GM12878 (cell line): ENCODE measurements at regions of chr12 and their contacts with region 1.

Region 1: DNA sequence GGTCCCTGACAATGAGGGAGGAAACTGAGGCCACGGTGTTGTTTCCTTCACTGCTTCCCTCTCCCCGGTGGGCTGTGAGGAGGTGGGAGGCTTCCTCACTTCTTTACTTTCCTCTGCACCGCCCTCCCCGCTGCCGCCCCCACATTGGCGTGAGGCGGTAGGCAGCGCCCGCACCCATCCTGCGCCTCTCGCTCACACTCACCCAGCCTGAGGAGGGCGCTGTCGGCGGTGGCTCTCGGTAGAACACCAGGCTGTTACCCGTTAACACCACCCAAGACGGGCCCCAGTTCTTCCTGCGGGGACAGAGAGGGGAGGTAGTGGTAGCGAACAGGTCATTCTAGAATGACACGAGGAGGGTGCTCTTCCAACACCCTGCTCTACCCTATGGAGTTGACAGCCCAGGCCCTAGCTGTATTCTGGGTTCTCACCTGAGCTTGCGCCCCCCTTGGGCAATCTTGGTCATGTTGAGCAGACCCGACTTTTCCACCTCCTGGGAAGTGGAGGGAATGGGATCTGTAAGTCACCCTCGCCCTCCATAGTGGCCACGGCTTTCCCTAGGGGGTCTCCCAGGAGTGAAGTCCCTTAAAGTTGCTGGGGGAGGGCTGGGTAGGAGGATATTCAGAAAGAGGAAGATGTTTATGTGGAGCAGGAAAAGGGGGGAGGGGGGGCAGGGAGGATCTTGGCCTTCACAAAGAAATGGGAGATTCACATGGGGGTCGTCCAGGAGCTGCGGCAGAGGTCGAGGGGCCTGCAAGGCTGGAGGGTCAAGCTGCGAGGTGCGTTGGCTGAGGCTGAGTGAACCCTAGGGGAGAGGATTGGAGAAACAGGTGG is 3.3 kb downstream of the ARHGAP9 start:
- DNase-seq: no peak
- ATAC-seq: peak; percentile 62
- H3K4me3 ChIP-seq: peak overlapping the region; percentile 92
- H3K27ac ChIP-seq: peak overlapping the region; percentile 85
- H3K4me1 ChIP-seq: peaks cover 34% of the 10 kb centered on the region
- H3K27me3 ChIP-seq: no peaks in the 10 kb centered on the region
- CTCF ChIP-seq: peak; percentile 48 to 81 (median 72)
- EP300 ChIP-seq: no peak
- POLR2A ChIP-seq: peak; percentile 73
- RAD21 ChIP-seq: peak; percentile 43

Region 2: GRCh38 chr12:57487597-57488401 is 11.4 kb after region 1 on chr12 and contains the start of gene MARS1:
- CTCF ChIA-PET with region 1: interaction called, 13 read pairs
- POLR2A ChIA-PET with region 1: interaction called, 4 read pairs
- RAD21 ChIA-PET with region 1: interaction called, 3 read pairs
- SMC1A ChIA-PET with region 1: interaction called, 3 read pairs
- in situ Hi-C with region 1: no loop called
- intact Hi-C with region 1: no loop called
- DNase-seq: peak; percentile 95
- ATAC-seq: peak; percentile 99
- H3K4me3 ChIP-seq: peak within 1 kb of the TSS; percentile 97
- H3K27ac ChIP-seq: peak within 1 kb of the TSS; percentile 76
- H3K4me1 ChIP-seq: peaks cover 6% of the 10 kb centered on the region
- H3K27me3 ChIP-seq: no peaks in the 10 kb centered on the region
- CTCF ChIP-seq: peak; percentile 34 to 41 (median 37); a peak in 4 of 6 replicates
- EP300 ChIP-seq: peak in 1 of 2 experiments; percentile 2; a peak in 1 of 4 replicates
- POLR2A ChIP-seq: peak; percentile 95
- RAD21 ChIP-seq: 0 out of 2 replicates have a peak, but pooled peaks have one; percentile 22
- polyA plus RNA-seq, gene MARS1: 72.3 to 129 TPM

Region 3: GRCh38 chr12:57744777-57745484 is 268.6 kb after region 1 on chr12 and contains the start of gene TSPAN31:
- CTCF ChIA-PET with region 1: no interaction called
- POLR2A ChIA-PET with region 1: interaction called, 11 read pairs
- RAD21 ChIA-PET with region 1: interaction called, 5 read pairs
- SMC1A ChIA-PET with region 1: no interaction called
- in situ Hi-C with region 1: no loop called
- intact Hi-C with region 1: loop called (anchors 10 kb)
- DNase-seq: peak; percentile 92
- ATAC-seq: peak; percentile 87
- H3K4me3 ChIP-seq: peak within 1 kb of the TSS; percentile 91
- H3K27ac ChIP-seq: peak within 1 kb of the TSS; percentile 94
- H3K4me1 ChIP-seq: peaks cover 22% of the 10 kb centered on the region
- H3K27me3 ChIP-seq: no peaks in the 10 kb centered on the region
- CTCF ChIP-seq: no peak
- EP300 ChIP-seq: no peak
- POLR2A ChIP-seq: peak; percentile 72
- RAD21 ChIP-seq: no peak
- polyA plus RNA-seq, gene TSPAN31: 23.4 to 25.1 TPM